ENCODE measurements at regions of chr14 and their contacts with region 1.

Region 1: DNA sequence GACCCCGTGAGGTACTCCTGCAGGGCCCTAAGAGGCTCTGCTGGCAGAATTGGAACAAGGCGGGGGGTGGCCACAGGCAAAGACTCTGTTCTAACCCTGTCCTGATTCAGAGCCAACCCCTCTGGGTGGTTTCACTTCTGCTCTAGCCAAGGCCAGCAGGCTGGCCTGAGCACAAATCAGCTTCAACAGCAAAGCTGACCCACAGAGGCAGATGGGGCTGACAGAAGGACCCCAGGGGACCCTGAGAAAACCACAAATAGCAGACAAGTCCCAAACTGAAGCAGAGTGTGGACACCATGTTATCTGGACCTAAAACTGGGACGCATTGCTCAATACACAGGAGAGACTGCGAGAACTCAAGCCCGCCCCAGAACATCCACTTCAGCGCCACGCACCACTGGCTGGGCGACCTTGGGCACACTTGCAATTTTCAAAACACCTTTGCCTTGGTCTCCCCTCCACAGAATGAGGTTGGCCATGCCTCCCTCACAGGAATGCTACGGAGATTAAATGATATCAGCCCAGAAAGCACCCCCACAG is 76.4 kb upstream of the DICER1 start:
- DNase-seq: peak; percentile 62 to 64
- ATAC-seq: peak; percentile 78 to 91 (median 82)
- H3K4me3 ChIP-seq: no peak overlapping the region
- H3K27ac ChIP-seq: peak overlapping the region in 7 of 10 donors; percentile 6 to 52 (median 40)
- H3K4me1 ChIP-seq: peaks cover 0 to 58% (median 17%) of the 10 kb centered on the region in 9 donors
- H3K27me3 ChIP-seq: peaks cover 0 to 15% (median 4%) of the 10 kb centered on the region in 7 donors
- CTCF ChIP-seq: no peak

Region 2: GRCh38 chr14:95040708-95041476 is 192.9 kb before region 1 on chr14:
- intact Hi-C with region 1: no loop called
- DNase-seq: no peak
- ATAC-seq: peak in 1 of 8 donors; percentile 28
- H3K4me3 ChIP-seq: no peak overlapping the region
- H3K27ac ChIP-seq: no peak overlapping the region
- H3K4me1 ChIP-seq: no peaks in the 10 kb centered on the region
- H3K27me3 ChIP-seq: peaks cover 0 to 22% (median 9%) of the 10 kb centered on the region in 7 donors
- CTCF ChIP-seq: no peak

Region 3: DNA sequence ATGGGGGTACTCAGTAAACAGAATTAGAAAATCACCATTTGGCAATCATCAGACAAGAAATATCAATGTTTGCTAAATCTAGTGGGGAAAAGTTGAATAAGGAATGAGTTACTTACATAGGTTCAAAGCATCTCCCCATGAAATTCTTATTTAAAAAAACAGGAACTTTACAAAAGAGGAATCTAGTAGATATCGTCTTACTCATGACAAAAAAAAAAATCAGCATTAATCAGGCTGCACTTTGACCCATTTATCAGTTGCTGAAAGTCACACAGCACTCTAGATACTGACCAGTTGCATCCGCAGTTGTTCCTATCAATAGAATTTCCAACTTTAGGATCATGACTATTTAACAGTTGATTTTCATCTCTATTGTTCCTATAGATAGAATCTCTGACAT is 70.6 kb before region 1 on chr14:
- intact Hi-C with region 1: no loop called
- DNase-seq: no peak
- ATAC-seq: no peak
- H3K4me3 ChIP-seq: no peak overlapping the region
- H3K27ac ChIP-seq: peak overlapping the region in 1 of 10 donors; percentile 64
- H3K4me1 ChIP-seq: peaks cover 3 to 33% (median 8%) of the 10 kb centered on the region in 9 donors
- H3K27me3 ChIP-seq: no peaks in the 10 kb centered on the region
- CTCF ChIP-seq: no peak

Region 4: GRCh38 chr14:95291859-95292542 is 58.2 kb after region 1 on chr14:
- intact Hi-C with region 1: loop called in 1 of 10 experiments (anchors 10 kb)
- DNase-seq: peak; percentile 76 to 88
- ATAC-seq: peak; percentile 49 to 82 (median 71)
- H3K4me3 ChIP-seq: no peak overlapping the region
- H3K27ac ChIP-seq: peak overlapping the region in 9 of 10 donors; percentile 42 to 84 (median 71)
- H3K4me1 ChIP-seq: peaks cover 14 to 30% (median 19%) of the 10 kb centered on the region in 9 donors
- H3K27me3 ChIP-seq: no peaks in the 10 kb centered on the region
- CTCF ChIP-seq: no peak

Measured in heart right ventricle (tissue), 16 donors.